ENCODE measurements at regions of chr12 and their contacts with region 1.

Region 1: DNA sequence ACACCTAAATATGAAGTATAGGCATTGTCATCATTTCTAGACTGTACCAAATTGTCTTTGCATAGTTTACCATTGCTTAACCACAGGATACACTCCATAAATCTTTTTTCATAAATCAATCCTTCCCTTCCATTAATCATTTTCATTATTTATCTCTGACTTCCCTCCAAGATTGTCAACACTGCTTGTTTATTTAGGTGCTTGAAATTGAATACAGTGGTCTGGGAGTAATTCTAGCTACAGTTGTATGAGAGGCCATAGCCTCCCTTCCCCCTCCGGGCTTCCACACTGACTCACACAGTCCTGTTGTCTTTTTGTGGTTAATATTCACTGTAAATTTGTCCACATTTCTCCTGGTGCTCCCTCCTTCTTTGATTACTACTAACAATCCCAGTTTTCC is 114.2 kb upstream of the ARID2 start:
- DNase-seq: peak; percentile 27
- H3K4me3 ChIP-seq: no peak overlapping the region
- H3K27ac ChIP-seq: no peak overlapping the region
- H3K27me3 ChIP-seq: no peaks in the 10 kb centered on the region
- CTCF ChIP-seq: no peak

Region 2: DNA sequence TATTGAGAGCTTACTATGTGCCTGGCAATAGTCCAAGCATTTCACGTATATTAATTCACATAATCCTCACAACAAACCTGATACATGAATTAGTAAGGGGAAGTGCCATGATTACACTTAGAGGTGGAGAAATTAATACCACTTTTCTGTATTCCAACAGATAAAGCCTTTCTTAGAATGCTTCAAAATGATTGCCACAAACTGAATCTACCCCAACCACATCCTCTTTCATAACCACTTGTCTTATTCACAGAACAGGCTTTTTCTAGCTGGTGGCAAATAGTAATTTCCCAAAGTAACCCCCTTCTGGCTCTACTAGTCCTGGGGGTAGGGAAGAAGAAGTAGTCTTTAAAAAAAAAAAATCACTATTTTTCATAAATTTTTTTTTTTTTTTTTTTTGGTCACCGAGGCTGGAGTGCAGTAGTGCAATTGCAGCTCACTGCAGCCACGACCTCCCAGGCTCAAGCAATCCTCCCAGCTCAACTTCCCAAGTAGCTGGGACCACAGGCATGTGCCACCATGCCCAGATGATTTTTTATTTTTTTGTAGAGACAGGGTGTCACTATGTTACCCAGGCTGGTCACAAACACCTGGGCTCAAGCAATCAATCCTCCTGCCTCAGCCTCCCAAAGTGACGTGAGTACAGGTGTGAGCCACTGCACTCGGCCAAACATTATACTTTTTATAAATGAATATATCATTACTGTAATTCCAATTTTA is 55.2 kb after region 1 on chr12:
- CTCF ChIA-PET with region 1: interaction called, 11 read pairs
- POLR2A ChIA-PET with region 1: no interaction called
- DNase-seq: no peak
- H3K4me3 ChIP-seq: no peak overlapping the region
- H3K27ac ChIP-seq: no peak overlapping the region
- H3K27me3 ChIP-seq: no peaks in the 10 kb centered on the region
- CTCF ChIP-seq: no peak